ENCODE measurements at regions of chr11 and their contacts with region 1.

Region 1: DNA sequence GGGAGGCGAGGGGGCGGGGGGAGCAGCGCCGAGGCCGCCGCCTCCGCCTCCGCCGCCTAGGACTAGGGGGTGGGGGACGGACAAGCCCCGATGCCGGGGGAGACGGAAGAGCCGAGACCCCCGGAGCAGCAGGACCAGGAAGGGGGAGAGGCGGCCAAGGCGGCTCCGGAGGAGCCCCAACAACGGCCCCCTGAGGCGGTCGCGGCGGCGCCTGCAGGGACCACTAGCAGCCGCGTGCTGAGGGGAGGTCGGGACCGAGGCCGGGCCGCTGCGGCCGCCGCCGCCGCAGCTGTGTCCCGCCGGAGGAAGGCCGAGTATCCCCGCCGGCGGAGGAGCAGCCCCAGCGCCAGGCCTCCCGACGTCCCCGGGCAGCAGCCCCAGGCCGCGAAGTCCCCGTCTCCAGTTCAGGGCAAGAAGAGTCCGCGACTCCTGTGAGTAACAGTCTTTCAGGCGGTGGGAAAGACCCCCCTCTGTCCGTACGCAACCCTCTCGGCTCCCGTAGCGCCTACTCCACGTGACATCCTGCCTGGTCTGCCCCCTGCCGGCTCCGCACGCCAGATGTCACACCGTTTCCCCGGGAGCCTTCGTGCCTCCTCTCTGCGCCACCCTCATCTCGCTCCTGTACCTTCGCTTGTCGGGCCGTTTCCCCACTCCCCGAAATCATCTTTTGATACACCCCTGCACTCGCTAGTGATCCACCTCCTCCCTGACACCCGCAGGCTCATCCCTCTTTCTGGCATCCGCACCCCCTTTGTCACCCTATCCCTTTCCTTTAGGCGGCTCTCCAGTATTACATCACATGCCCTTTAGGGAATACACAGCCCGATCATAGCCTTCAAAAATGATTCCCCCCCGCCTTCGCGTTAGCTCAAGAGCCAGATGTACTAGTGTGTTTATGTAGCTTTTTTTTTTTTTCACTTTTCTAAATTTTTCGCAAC is 598 bp downstream of the ZFP91 start:
- DNase-seq: peak; percentile 85 to 93 (median 90)
- ATAC-seq: peak; percentile 60
- H3K4me3 ChIP-seq: peak overlapping the region; percentile 85
- H3K4me3 Mint-ChIP-seq: peak overlapping the region; percentile 95 to 100 (median 98)
- H3K27ac ChIP-seq: peak overlapping the region; percentile 98
- H3K27ac Mint-ChIP-seq: peak overlapping the region; percentile 98 to 100 (median 100)
- H3K4me1 ChIP-seq: peaks cover 42 to 58% of the 10 kb centered on the region in 2 donors
- H3K4me1 Mint-ChIP-seq: peaks cover 27 to 80% (median 70%) of the 10 kb centered on the region in 7 donors
- H3K27me3 ChIP-seq: no peaks in the 10 kb centered on the region
- H3K27me3 Mint-ChIP-seq: peaks cover 0 to 5% (median 0%) of the 10 kb centered on the region in 5 donors

Region 2: DNA sequence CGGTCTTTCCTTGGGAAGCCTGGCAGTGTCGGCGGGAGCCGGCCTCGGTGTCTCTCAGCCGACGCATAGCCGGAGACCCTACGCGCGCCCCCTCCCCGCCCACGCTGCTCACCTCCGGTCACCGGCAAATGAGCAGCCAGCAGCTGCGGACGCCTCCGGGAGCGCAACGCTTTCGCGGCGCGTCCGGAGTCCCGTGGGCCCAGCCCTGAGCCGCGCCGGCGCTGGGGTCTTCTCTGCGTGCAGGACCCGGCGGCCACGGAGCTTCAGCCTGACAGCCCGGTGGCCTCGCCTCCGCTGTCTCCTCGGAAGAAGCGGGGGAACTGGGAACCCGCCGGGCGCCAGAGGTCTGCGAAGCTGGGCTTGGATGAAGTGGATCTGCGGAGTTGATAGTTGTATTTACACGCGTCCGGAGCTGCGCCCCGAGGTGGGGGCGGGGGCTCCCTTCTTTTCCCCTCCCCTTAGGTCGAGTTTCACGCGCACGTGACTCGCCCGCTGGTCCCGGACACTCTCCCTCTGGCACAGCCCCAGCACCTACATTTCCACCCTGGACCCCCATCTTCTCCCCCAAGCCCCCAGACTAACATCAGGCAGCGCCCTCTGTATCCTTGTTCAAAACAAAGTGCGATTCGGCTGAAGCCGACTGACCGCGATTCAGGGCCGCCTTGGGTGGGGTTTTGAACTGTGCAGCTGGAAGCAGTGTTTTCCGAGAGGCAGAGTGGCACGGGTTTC is 1064.0 kb before region 1 on chr11 and contains the start of gene SLC43A1:
- CTCF ChIA-PET with region 1: no interaction called
- POLR2A ChIA-PET with region 1: no interaction called
- intact Hi-C with region 1: loop called in 1 of 2 experiments (anchors 5 kb)
- DNase-seq: peak in 2 of 9 donors; percentile 17 to 54
- ATAC-seq: peak; percentile 33
- H3K4me3 ChIP-seq: peak within 1 kb of the TSS; percentile 63
- H3K4me3 Mint-ChIP-seq: peak within 1 kb of the TSS; percentile 95 to 99 (median 98)
- H3K27ac ChIP-seq: peak within 1 kb of the TSS; percentile 63
- H3K27ac Mint-ChIP-seq: peak within 1 kb of the TSS; percentile 69 to 93 (median 78)
- H3K4me1 ChIP-seq: peaks cover 5 to 7% of the 10 kb centered on the region in 2 donors
- H3K4me1 Mint-ChIP-seq: peaks cover 19 to 31% (median 29%) of the 10 kb centered on the region in 7 donors
- H3K27me3 ChIP-seq: no peaks in the 10 kb centered on the region
- H3K27me3 Mint-ChIP-seq: peaks cover 0 to 10% (median 0%) of the 10 kb centered on the region in 5 donors
- total RNA-seq, gene SLC43A1: 10.1 to 19.2 (median 16.3) TPM

Region 3: GRCh38 chr11:57667736-57668435 is 911.6 kb before region 1 on chr11 and contains the start of gene ZDHHC5:
- CTCF ChIA-PET with region 1: no interaction called
- POLR2A ChIA-PET with region 1: interaction called, 3 read pairs
- intact Hi-C with region 1: loop called (anchors 1 kb)
- DNase-seq: peak; percentile 92 to 100 (median 100)
- ATAC-seq: peak; percentile 90
- H3K4me3 ChIP-seq: peak within 1 kb of the TSS; percentile 87
- H3K4me3 Mint-ChIP-seq: peak within 1 kb of the TSS; percentile 84 to 100 (median 91)
- H3K27ac ChIP-seq: peak within 1 kb of the TSS; percentile 97
- H3K27ac Mint-ChIP-seq: peak within 1 kb of the TSS; percentile 97 to 100 (median 98)
- H3K4me1 ChIP-seq: peaks cover 25 to 28% of the 10 kb centered on the region in 2 donors
- H3K4me1 Mint-ChIP-seq: peaks cover 35 to 62% (median 50%) of the 10 kb centered on the region in 7 donors
- H3K27me3 ChIP-seq: no peaks in the 10 kb centered on the region
- H3K27me3 Mint-ChIP-seq: no peaks in the 10 kb centered on the region
- total RNA-seq, gene ZDHHC5: 51.4 to 82.2 (median 59.1) TPM

Region 4: DNA sequence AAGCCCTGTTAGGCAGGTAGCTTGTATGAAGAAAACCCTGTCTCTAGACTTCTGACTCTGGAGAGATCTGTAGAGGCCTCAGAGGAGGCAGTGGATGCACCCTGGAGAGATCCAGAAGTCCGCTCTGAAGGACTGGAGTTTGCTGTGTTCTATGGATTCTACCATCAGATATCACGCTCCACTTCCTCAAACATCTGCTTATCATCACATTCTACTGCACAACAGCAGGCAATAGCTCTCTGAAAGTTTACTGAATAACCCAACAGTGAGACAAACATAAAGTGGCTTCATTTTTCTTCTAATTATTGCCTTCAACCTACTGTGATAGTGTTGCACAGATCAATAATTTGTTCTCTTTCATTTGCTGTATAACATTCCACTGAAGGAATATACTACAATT is 614.8 kb before region 1 on chr11:
- CTCF ChIA-PET with region 1: no interaction called
- POLR2A ChIA-PET with region 1: no interaction called
- intact Hi-C with region 1: no loop called
- DNase-seq: no peak
- ATAC-seq: no peak
- H3K4me3 ChIP-seq: no peak overlapping the region
- H3K4me3 Mint-ChIP-seq: no peak overlapping the region
- H3K27ac ChIP-seq: no peak overlapping the region
- H3K27ac Mint-ChIP-seq: no peak overlapping the region
- H3K4me1 ChIP-seq: no peaks in the 10 kb centered on the region
- H3K4me1 Mint-ChIP-seq: no peaks in the 10 kb centered on the region
- H3K27me3 ChIP-seq: no peaks in the 10 kb centered on the region
- H3K27me3 Mint-ChIP-seq: peaks cover 5 to 19% (median 12%) of the 10 kb centered on the region in 5 donors

Region 5: GRCh38 chr11:58524232-58525036 is 55.0 kb before region 1 on chr11:
- CTCF ChIA-PET with region 1: interaction called, 22 read pairs
- POLR2A ChIA-PET with region 1: interaction called, 140 read pairs
- intact Hi-C with region 1: loop called (anchors 1 kb)
- DNase-seq: peak in 8 of 9 donors; percentile 39 to 78 (median 70)
- ATAC-seq: peak; percentile 78
- H3K4me3 ChIP-seq: peak overlapping the region; percentile 10
- H3K4me3 Mint-ChIP-seq: peak overlapping the region; percentile 65 to 85 (median 80)
- H3K27ac ChIP-seq: peak overlapping the region; percentile 75
- H3K27ac Mint-ChIP-seq: peak overlapping the region; percentile 84 to 99 (median 97)
- H3K4me1 ChIP-seq: peaks cover 18 to 50% of the 10 kb centered on the region in 2 donors
- H3K4me1 Mint-ChIP-seq: peaks cover 27 to 90% (median 54%) of the 10 kb centered on the region in 7 donors
- H3K27me3 ChIP-seq: no peaks in the 10 kb centered on the region
- H3K27me3 Mint-ChIP-seq: no peaks in the 10 kb centered on the region

Region 6: GRCh38 chr11:58675334-58676155 is 96.1 kb after region 1 on chr11:
- CTCF ChIA-PET with region 1: no interaction called
- POLR2A ChIA-PET with region 1: no interaction called
- intact Hi-C with region 1: loop called (anchors 2 kb)
- DNase-seq: peak; percentile 37 to 75 (median 65)
- ATAC-seq: peak; percentile 83
- H3K4me3 ChIP-seq: no peak overlapping the region
- H3K4me3 Mint-ChIP-seq: no peak overlapping the region
- H3K27ac ChIP-seq: no peak overlapping the region
- H3K27ac Mint-ChIP-seq: no peak overlapping the region
- H3K4me1 ChIP-seq: no peaks in the 10 kb centered on the region
- H3K4me1 Mint-ChIP-seq: no peaks in the 10 kb centered on the region
- H3K27me3 ChIP-seq: peaks cover 0 to 4% of the 10 kb centered on the region in 2 donors
- H3K27me3 Mint-ChIP-seq: peaks cover 0 to 5% (median 0%) of the 10 kb centered on the region in 5 donors

Region 7: DNA sequence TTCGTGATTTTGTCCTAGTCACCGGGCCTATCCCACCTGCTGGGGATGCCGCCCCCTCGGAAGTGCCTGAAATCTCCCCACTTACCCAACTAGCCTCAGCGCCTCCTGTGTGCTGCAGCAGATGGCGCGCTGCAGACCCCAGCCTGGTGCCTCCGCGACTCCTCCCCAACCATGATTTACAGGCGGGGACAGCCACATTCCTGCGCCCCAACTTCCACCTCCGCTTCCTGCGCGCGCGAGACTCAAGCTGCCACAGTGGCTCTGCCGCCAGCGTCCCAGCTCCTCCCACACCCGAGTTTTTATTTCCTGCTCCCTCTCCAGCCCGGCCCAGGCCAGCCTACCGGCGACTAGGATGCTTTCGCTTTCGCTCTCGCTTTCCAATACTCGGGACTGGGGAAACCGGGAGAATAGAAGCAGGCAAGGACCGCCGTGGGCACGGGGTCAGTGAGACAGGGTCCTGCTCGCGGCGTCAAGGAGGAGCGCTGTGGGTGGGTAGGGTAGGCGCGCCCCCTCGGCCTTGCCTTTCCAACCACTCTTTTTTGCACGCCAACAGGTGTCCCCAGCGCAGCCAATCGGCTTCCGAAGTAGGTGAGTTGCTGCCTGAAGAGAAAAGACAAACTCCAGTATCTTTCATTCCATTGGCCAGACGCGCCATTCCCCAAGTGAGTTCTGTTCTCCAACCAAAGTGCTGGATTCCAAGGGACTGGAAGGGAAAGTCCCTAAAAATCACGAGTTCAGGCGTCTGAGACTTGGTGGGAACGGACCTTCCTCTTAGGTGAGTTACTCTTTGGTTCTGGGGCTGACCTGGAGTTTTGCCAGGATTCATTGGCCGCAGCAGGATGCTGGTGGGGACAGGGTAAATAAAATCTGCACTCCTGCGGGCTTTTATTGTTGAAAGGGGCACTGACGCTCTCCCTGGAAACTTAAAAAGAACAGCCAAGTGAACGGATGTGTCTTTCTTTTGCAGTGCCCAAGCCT is 563.4 kb after region 1 on chr11 and contains the start of gene FAM111A:
- CTCF ChIA-PET with region 1: no interaction called
- POLR2A ChIA-PET with region 1: interaction called, 3 read pairs
- intact Hi-C with region 1: loop called (anchors 1 kb)
- DNase-seq: peak; percentile 68 to 91 (median 89)
- ATAC-seq: peak; percentile 91
- H3K4me3 ChIP-seq: peak within 1 kb of the TSS; percentile 97
- H3K4me3 Mint-ChIP-seq: peak within 1 kb of the TSS; percentile 95 to 100 (median 98)
- H3K27ac ChIP-seq: peak within 1 kb of the TSS; percentile 81
- H3K27ac Mint-ChIP-seq: peak within 1 kb of the TSS; percentile 93 to 99 (median 97)
- H3K4me1 ChIP-seq: peaks cover 19 to 24% of the 10 kb centered on the region in 2 donors
- H3K4me1 Mint-ChIP-seq: peaks cover 42 to 70% (median 53%) of the 10 kb centered on the region in 7 donors
- H3K27me3 ChIP-seq: no peaks in the 10 kb centered on the region
- H3K27me3 Mint-ChIP-seq: no peaks in the 10 kb centered on the region
- total RNA-seq, gene FAM111A: 73.1 to 138 (median 117) TPM

Measured in naive thymus-derived CD4-positive, alpha-beta T cell (primary cell).